ENCODE measurements at regions of chr13 and their contacts with region 1.

Region 1: DNA sequence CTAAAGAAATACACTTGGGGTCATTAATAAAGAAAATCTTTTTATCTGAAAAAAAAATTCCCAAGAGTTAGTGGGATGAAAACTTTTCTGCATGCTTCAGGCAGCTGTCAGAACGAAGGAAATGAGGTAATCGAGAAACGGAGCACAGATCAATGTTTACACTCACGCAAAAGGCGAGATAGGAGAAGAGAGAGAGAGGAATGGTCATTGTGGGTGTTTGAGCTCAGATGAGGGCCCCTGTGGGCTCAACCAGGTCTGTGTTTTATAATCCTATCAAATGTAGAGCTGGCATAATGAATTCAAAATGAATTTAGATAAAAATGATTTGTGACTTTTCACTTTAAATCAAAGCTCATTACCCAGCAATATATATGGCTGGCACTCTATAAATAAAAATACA is 6.3 kb upstream of the RXFP2 start:
- DNase-seq: no peak
- H3K4me3 ChIP-seq: no peak overlapping the region
- H3K27ac ChIP-seq: no peak overlapping the region
- H3K4me1 ChIP-seq: peaks cover 0 to 11% (median 0%) of the 10 kb centered on the region in 4 donors
- H3K27me3 ChIP-seq: no peaks in the 10 kb centered on the region
- CTCF ChIP-seq: no peak

Region 2: DNA sequence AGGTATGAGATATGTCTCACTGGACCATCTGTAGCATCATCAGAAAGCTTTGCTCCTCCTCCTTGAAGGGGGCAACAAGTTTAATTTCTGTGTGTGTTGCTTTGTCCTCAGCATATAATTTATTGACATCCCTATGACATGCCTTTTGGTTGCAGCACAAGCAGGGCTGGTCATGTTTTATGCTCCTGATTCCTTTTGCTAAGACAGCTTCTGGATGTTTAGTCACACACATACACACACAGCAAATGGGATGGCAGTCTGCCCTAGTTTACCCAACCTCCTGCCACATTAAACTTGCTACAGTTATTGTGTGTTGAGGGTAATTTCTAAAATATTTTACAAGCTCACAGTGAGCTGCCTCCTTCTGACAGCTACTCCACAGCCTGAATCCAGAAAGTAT is 211.6 kb before region 1 on chr13:
- intact Hi-C with region 1: loop called (anchors 10 kb)
- DNase-seq: no peak
- H3K4me3 ChIP-seq: no peak overlapping the region
- H3K27ac ChIP-seq: no peak overlapping the region
- H3K4me1 ChIP-seq: peaks cover 0 to 20% (median 7%) of the 10 kb centered on the region in 4 donors
- H3K27me3 ChIP-seq: no peaks in the 10 kb centered on the region
- CTCF ChIP-seq: no peak

Region 3: GRCh38 chr13:31684466-31684865 is 48.6 kb before region 1 on chr13:
- intact Hi-C with region 1: loop called (anchors 1 kb)
- DNase-seq: no peak
- H3K4me3 ChIP-seq: no peak overlapping the region
- H3K27ac ChIP-seq: no peak overlapping the region
- H3K4me1 ChIP-seq: peaks cover 0 to 18% (median 10%) of the 10 kb centered on the region in 4 donors
- H3K27me3 ChIP-seq: no peaks in the 10 kb centered on the region
- CTCF ChIP-seq: no peak

Region 4: GRCh38 chr13:31930901-31931522 is 197.9 kb after region 1 on chr13:
- intact Hi-C with region 1: no loop called
- DNase-seq: no peak
- H3K4me3 ChIP-seq: no peak overlapping the region
- H3K27ac ChIP-seq: no peak overlapping the region
- H3K4me1 ChIP-seq: peaks cover 0 to 32% (median 5%) of the 10 kb centered on the region in 4 donors
- H3K27me3 ChIP-seq: no peaks in the 10 kb centered on the region
- CTCF ChIP-seq: no peak

Measured in tibial artery (tissue), 4 donors.